Psoas muscle (tissue), 8 donors: ENCODE measurements at regions of chr20 and their contacts with region 1.

Region 1: GRCh38 chr20:60062811-60063451 is 104.7 kb downstream of the CDH26 start:
- DNase-seq: peak in 1 of 2 donors; percentile 70
- ATAC-seq: peak in 3 of 4 donors; percentile 50 to 64 (median 56)
- H3K4me3 ChIP-seq: peak overlapping the region; percentile 52
- H3K27ac ChIP-seq: peak overlapping the region; percentile 78
- H3K4me1 ChIP-seq: peaks cover 55% of the 10 kb centered on the region
- H3K27me3 ChIP-seq: no peaks in the 10 kb centered on the region
- CTCF ChIP-seq: no peak

Region 2: GRCh38 chr20:59925939-59926338 is 137.0 kb before region 1 on chr20:
- intact Hi-C with region 1: no loop called
- DNase-seq: no peak
- ATAC-seq: no peak
- H3K4me3 ChIP-seq: no peak overlapping the region
- H3K27ac ChIP-seq: no peak overlapping the region
- H3K4me1 ChIP-seq: no peaks in the 10 kb centered on the region
- H3K27me3 ChIP-seq: no peaks in the 10 kb centered on the region
- CTCF ChIP-seq: no peak

Region 3: DNA sequence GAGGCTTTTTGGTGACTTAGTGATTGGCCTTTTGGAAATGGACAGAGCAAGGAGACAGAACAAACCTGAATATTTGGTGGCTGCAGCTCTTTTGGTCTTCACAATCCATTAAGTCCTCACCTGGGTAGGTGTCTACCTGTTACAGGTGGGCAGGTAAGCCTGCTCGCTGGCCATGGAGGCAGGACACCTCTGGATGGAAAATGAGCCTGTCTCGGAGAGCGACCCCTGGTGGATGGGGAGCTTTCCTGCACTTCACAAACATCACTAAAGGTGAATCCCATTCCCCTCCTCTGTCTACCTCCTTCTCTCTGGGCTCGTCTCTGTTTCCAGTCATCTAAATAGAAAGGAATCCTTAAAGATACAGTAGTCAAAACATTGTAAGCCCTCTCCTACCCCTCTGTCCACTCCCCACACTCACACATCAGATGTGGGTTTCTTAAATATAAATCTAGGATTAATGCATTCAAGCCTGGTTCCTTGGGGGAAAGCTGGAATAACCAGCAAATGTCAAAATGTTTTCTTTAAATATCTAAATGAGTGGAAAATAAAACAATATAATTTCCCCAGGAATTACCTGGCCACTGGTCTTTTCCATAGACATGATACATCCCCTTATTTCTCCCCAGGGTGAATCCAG is 200.2 kb after region 1 on chr20:
- intact Hi-C with region 1: loop called (anchors 2 to 5 kb)
- DNase-seq: peak in 1 of 2 donors; percentile 26
- ATAC-seq: peak in 2 of 4 donors; percentile 52 to 66
- H3K4me3 ChIP-seq: no peak overlapping the region
- H3K27ac ChIP-seq: no peak overlapping the region
- H3K4me1 ChIP-seq: no peaks in the 10 kb centered on the region
- H3K27me3 ChIP-seq: peaks cover 0 to 3% (median 0%) of the 10 kb centered on the region in 3 donors
- CTCF ChIP-seq: peak; percentile 49